ENCODE measurements at regions of chr20 and their contacts with region 1.

Region 1: GRCh38 chr20:44129911-44130718 is 56.9 kb downstream of the JPH2 start:
- DNase-seq: no peak
- H3K4me3 ChIP-seq: no peak overlapping the region
- CTCF ChIP-seq: no peak

Region 2: GRCh38 chr20:44460795-44461141 is 330.7 kb after region 1 on chr20:
- in situ Hi-C with region 1: loop called (anchors 10 kb)
- DNase-seq: peak; percentile 16
- H3K4me3 ChIP-seq: no peak overlapping the region
- CTCF ChIP-seq: peak; percentile 51

Region 3: DNA sequence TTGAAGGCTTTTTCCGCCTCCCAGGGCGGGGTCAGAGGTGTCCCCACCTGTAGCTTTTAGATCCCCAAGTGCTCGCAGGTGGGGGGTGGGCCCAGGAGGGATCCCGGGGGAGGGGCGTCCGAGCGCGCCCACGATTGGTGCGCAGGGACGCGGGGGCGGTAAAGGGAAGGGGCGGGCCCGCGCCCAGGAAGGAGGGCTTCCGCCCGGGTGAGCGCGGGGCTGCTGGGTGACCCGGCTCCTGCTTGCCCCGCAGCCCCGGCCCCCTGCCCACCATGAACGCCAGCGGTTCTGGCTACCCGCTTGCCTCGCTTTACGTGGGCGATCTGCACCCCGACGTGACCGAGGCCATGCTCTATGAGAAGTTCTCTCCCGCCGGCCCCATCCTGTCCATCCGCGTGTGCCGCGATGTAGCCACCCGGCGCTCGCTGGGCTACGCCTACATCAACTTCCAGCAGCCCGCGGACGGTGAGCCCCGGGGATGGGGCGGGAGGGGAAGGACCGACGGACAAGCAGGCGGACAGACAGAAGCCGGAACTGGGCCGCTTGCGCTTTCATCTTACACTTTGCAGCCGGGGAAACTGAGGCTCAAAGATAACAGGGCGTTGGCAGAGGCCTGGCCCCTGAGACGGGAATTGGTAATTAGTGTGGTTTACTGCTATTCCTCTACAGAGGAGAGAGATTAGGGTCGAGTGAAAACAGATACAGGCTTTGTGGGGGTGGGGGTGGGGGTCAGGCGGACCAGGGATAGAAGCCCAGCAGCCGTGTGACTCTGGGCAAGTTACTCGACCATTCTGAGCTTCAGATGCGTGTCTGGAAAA is 780.0 kb after region 1 on chr20 and contains the start of gene PABPC1L:
- in situ Hi-C with region 1: no loop called
- DNase-seq: no peak
- H3K4me3 ChIP-seq: peak within 1 kb of the TSS; percentile 74
- CTCF ChIP-seq: no peak

Measured in astrocyte of the cerebellum (primary cell).